Natural killer cell (primary cell): ENCODE measurements at regions of chr14 and their contacts with region 1.

Region 1: GRCh38 chr14:100192672-100193416 is 33.4 kb upstream of the DEGS2 start:
- DNase-seq: peak; percentile 99 to 100
- ATAC-seq: peak; percentile 97 to 99 (median 98)
- H3K4me3 ChIP-seq: peak overlapping the region; percentile 40
- H3K4me3 Mint-ChIP-seq: peak overlapping the region; percentile 76
- H3K27ac ChIP-seq: peak overlapping the region; percentile 91
- H3K27ac Mint-ChIP-seq: peak overlapping the region; percentile 84 to 93
- H3K4me1 ChIP-seq: peaks cover 18% of the 10 kb centered on the region
- H3K4me1 Mint-ChIP-seq: peaks cover 7 to 9% of the 10 kb centered on the region in 2 donors
- H3K27me3 ChIP-seq: no peaks in the 10 kb centered on the region
- H3K27me3 Mint-ChIP-seq: no peaks in the 10 kb centered on the region
- CTCF ChIP-seq: peak; percentile 80

Region 2: DNA sequence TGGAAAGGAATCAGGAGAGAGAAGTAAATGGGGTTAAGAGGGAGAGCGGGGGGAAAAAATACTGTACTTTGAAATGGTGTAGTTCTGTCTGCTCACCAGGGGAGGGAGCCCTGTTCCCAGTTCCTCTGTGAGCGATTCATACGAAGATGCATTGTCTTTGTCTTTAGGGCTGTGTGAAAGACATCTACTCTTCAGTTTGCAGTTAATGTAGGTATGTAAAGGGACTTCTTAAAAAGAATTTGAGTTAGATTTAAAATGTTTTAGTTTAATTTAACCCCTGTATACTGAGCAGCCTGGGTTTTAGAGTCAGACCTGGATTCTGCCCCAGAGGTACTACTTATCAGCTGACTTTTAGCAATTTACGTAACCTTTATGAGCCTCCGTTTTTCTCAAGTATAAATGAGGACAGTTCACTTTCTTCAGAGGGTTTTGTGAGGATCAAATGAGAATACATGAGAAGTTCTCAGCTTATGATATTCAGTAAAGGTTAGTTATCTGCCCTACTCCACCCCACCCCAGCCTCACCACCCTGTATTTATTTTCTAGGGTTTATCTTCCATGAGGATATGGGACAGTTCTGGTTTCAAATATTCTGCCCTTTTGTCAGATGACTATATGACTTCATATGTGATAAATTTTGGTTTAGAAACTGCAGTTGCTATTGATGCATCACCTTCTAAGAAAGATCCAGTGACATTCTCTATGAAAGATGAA is 210.2 kb before region 1 on chr14:
- intact Hi-C with region 1: loop called (anchors 1 kb)
- DNase-seq: peak; percentile 59 to 89
- ATAC-seq: peak; percentile 95 to 100 (median 100)
- H3K4me3 ChIP-seq: no peak overlapping the region
- H3K4me3 Mint-ChIP-seq: no peak overlapping the region
- H3K27ac ChIP-seq: no peak overlapping the region
- H3K27ac Mint-ChIP-seq: no peak overlapping the region
- H3K4me1 ChIP-seq: no peaks in the 10 kb centered on the region
- H3K4me1 Mint-ChIP-seq: peaks cover 0 to 4% of the 10 kb centered on the region in 2 donors
- H3K27me3 ChIP-seq: no peaks in the 10 kb centered on the region
- H3K27me3 Mint-ChIP-seq: no peaks in the 10 kb centered on the region
- CTCF ChIP-seq: peak; percentile 97

Region 3: GRCh38 chr14:100067971-100068959 is 124.6 kb before region 1 on chr14:
- intact Hi-C with region 1: loop called (anchors 2 kb)
- DNase-seq: peak; percentile 85 to 96
- ATAC-seq: peak; percentile 53 to 76 (median 65)
- H3K4me3 ChIP-seq: peak overlapping the region; percentile 78
- H3K4me3 Mint-ChIP-seq: peak overlapping the region; percentile 90
- H3K27ac ChIP-seq: peak overlapping the region; percentile 89
- H3K27ac Mint-ChIP-seq: peak overlapping the region; percentile 93
- H3K4me1 ChIP-seq: peaks cover 76% of the 10 kb centered on the region
- H3K4me1 Mint-ChIP-seq: peaks cover 92 to 95% of the 10 kb centered on the region in 2 donors
- H3K27me3 ChIP-seq: no peaks in the 10 kb centered on the region
- H3K27me3 Mint-ChIP-seq: no peaks in the 10 kb centered on the region
- CTCF ChIP-seq: no peak

Region 4: DNA sequence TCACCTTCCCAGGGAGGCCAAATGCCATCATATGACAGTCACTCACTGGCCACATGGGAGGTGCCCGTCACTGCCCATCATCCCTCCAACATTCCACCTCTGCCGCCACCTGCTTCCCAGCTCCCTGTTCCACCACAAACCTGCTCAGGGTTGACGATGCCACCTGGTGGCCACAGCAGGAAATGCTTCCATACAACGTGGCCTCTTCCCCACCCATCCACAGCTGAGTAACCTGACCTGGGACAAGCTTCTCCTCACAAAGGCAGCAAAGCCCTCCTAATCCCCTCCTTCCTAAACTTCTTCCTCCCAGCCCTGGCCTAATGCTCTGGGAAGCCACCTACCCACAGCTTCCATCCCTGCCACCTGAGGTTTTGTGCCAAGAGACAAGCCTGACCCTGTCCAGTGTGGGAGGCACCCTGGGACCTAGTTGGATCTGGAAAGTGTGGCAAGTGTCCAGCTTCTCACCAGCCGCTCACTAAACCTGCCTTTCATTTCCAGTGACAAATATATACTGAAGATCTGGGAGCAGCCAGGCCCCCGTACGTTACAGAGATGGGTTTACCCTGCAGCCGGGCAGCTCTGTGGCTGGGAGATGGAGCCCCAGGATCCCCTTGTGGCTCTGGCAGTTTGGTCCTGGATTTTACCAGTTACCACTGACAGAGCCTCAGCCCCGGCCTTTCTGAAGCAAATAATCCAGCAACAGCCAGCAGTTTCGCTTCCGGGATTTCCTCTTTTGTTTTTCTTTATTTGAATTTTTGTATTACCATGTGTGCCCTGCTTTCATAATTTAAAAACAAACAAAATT is 37.6 kb before region 1 on chr14:
- intact Hi-C with region 1: no loop called
- DNase-seq: peak in 1 of 2 donors; percentile 52
- ATAC-seq: peak in 1 of 3 donors; percentile 32
- H3K4me3 ChIP-seq: no peak overlapping the region
- H3K4me3 Mint-ChIP-seq: no peak overlapping the region
- H3K27ac ChIP-seq: no peak overlapping the region
- H3K27ac Mint-ChIP-seq: no peak overlapping the region
- H3K4me1 ChIP-seq: peaks cover 11% of the 10 kb centered on the region
- H3K4me1 Mint-ChIP-seq: peaks cover 0 to 4% of the 10 kb centered on the region in 2 donors
- H3K27me3 ChIP-seq: peaks cover 7% of the 10 kb centered on the region
- H3K27me3 Mint-ChIP-seq: peaks cover 0 to 5% of the 10 kb centered on the region in 2 donors
- CTCF ChIP-seq: peak; percentile 12

Region 5: GRCh38 chr14:100168506-100168905 is 24.3 kb before region 1 on chr14:
- intact Hi-C with region 1: no loop called
- DNase-seq: no peak
- ATAC-seq: peak in 1 of 3 donors; percentile 11
- H3K4me3 ChIP-seq: no peak overlapping the region
- H3K4me3 Mint-ChIP-seq: peak overlapping the region; percentile 67
- H3K27ac ChIP-seq: no peak overlapping the region
- H3K27ac Mint-ChIP-seq: peak overlapping the region in 1 of 2 donors; percentile 49
- H3K4me1 ChIP-seq: peaks cover 29% of the 10 kb centered on the region
- H3K4me1 Mint-ChIP-seq: peaks cover 20 to 38% of the 10 kb centered on the region in 2 donors
- H3K27me3 ChIP-seq: no peaks in the 10 kb centered on the region
- H3K27me3 Mint-ChIP-seq: peaks cover 0 to 3% of the 10 kb centered on the region in 2 donors
- CTCF ChIP-seq: no peak

Region 6: GRCh38 chr14:100213956-100214774 is 21.3 kb after region 1 on chr14:
- intact Hi-C with region 1: loop called (anchors 1 kb)
- DNase-seq: peak; percentile 84 to 95
- ATAC-seq: peak; percentile 96 to 99 (median 96)
- H3K4me3 ChIP-seq: peak overlapping the region; percentile 76
- H3K4me3 Mint-ChIP-seq: peak overlapping the region; percentile 87
- H3K27ac ChIP-seq: peak overlapping the region; percentile 83
- H3K27ac Mint-ChIP-seq: peak overlapping the region; percentile 80
- H3K4me1 ChIP-seq: peaks cover 19% of the 10 kb centered on the region
- H3K4me1 Mint-ChIP-seq: peaks cover 18 to 29% of the 10 kb centered on the region in 2 donors
- H3K27me3 ChIP-seq: no peaks in the 10 kb centered on the region
- H3K27me3 Mint-ChIP-seq: no peaks in the 10 kb centered on the region
- CTCF ChIP-seq: no peak